Activated CD4-positive, alpha-beta T cell treated with anti-CD3 and anti-CD28 coated beads, Interleukin-2, amount 10 ng/mL, durations not matched to agents 24 days and 14 days (primary cell): ENCODE measurements at regions of chr2 and their contacts with region 1.

Region 1: DNA sequence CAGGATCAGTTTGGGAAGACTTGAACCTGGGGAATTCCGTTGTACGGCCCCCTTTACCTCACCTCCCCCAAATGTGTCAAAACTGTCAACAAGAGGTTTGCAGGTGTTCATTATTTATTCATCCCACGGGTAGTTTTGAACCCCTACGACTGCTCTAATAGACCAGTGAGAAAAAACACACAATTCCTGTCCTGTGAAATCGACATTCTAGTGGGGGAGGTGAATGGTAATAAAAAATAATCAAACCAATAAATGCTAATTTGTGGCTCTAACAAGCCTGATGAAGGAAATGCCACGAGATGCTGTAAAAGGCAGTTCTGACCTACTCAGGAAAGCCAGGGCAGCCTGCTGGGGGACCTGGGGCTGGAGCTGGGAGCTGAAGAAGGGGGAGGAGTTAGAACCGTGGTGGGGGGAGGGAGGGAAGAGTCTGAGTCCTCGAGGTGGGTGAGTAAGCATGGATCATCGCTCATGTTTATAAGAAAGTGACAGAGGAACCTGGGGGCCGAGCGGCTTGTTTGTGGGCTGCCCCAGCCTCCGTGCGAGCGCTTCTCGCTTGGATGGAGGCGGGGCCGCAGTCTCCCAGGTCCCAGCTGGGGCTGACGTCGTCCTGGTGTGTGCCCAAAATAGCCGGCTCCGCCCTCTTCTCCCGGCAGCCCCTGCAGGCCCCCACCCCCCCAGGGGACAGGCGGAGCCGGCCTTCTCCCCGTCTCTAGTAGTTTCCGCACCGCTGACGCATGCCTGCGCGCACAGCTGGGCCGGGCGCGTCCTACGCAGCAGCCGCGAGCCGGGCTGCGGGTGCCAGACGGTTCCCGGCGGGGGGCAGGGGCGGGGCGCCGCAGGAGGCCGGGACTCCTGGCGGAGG is at the start of gene DNAJB2:
- DNase-seq: peak; percentile 100
- H3K4me3 Mint-ChIP-seq: peak within 1 kb of the TSS; percentile 97
- H3K27ac Mint-ChIP-seq: peak within 1 kb of the TSS; percentile 96
- H3K4me1 Mint-ChIP-seq: peaks cover 42% of the 10 kb centered on the region
- H3K27me3 Mint-ChIP-seq: no peaks in the 10 kb centered on the region
- total RNA-seq, gene DNAJB2: 49.7 and 52.4 TPM in 2 replicates

Region 2: GRCh38 chr2:219160186-219161017 is 118.5 kb before region 1 on chr2 and contains the start of gene NHEJ1:
- intact Hi-C with region 1: loop called (anchors 1 kb)
- DNase-seq: peak; percentile 98
- H3K4me3 Mint-ChIP-seq: peak within 1 kb of the TSS; percentile 88
- H3K27ac Mint-ChIP-seq: peak within 1 kb of the TSS; percentile 97
- H3K4me1 Mint-ChIP-seq: peaks cover 20% of the 10 kb centered on the region
- H3K27me3 Mint-ChIP-seq: no peaks in the 10 kb centered on the region
- total RNA-seq, gene NHEJ1: 20.7 and 22.8 TPM in 2 replicates

Region 3: GRCh38 chr2:219218732-219219701 is 59.9 kb before region 1 on chr2 and contains the start of gene ABCB6:
- intact Hi-C with region 1: loop called (anchors 2 kb)
- DNase-seq: peak; percentile 96
- H3K4me3 Mint-ChIP-seq: peak within 1 kb of the TSS; percentile 91
- H3K27ac Mint-ChIP-seq: peak within 1 kb of the TSS; percentile 81
- H3K4me1 Mint-ChIP-seq: peaks cover 24% of the 10 kb centered on the region
- H3K27me3 Mint-ChIP-seq: no peaks in the 10 kb centered on the region
- total RNA-seq, gene ABCB6: 28.8 TPM in 2 replicates

Region 4: GRCh38 chr2:219253753-219254590 is 24.9 kb before region 1 on chr2 and contains the start of gene TUBA4A:
- intact Hi-C with region 1: loop called (anchors 1 kb)
- DNase-seq: peak; percentile 97
- H3K4me3 Mint-ChIP-seq: peak within 1 kb of the TSS; percentile 80
- H3K27ac Mint-ChIP-seq: peak within 1 kb of the TSS; percentile 91
- H3K4me1 Mint-ChIP-seq: peaks cover 47% of the 10 kb centered on the region
- H3K27me3 Mint-ChIP-seq: no peaks in the 10 kb centered on the region
- total RNA-seq, gene TUBA4A: 235 and 240 TPM in 2 replicates

Region 5: GRCh38 chr2:219498280-219499057 is 219.6 kb after region 1 on chr2 and contains the start of gene GMPPA:
- intact Hi-C with region 1: loop called (anchors 2 kb)
- DNase-seq: peak; percentile 99
- H3K4me3 Mint-ChIP-seq: peak within 1 kb of the TSS; percentile 97
- H3K27ac Mint-ChIP-seq: peak within 1 kb of the TSS; percentile 83
- H3K4me1 Mint-ChIP-seq: peaks cover 26% of the 10 kb centered on the region
- H3K27me3 Mint-ChIP-seq: peaks cover 39% of the 10 kb centered on the region
- total RNA-seq, gene GMPPA: 45.5 and 46.0 TPM in 2 replicates